ENCODE measurements at regions of chr9 and their contacts with region 1.

Region 1: GRCh38 chr9:35903049-35903448 is 3.0 kb upstream of the HRCT1 start:
- DNase-seq: no peak
- ATAC-seq: peak in 1 of 4 donors; percentile 33
- H3K4me3 ChIP-seq: no peak overlapping the region
- H3K27ac ChIP-seq: no peak overlapping the region
- H3K4me1 ChIP-seq: peaks cover 23% of the 10 kb centered on the region
- H3K27me3 ChIP-seq: no peaks in the 10 kb centered on the region
- CTCF ChIP-seq: peak; percentile 80

Region 2: GRCh38 chr9:35842795-35843194 is 60.3 kb before region 1 on chr9:
- intact Hi-C with region 1: no loop called
- DNase-seq: no peak
- ATAC-seq: no peak
- H3K4me3 ChIP-seq: no peak overlapping the region
- H3K27ac ChIP-seq: no peak overlapping the region
- H3K4me1 ChIP-seq: peaks cover 25% of the 10 kb centered on the region
- H3K27me3 ChIP-seq: no peaks in the 10 kb centered on the region
- CTCF ChIP-seq: no peak

Region 3: DNA sequence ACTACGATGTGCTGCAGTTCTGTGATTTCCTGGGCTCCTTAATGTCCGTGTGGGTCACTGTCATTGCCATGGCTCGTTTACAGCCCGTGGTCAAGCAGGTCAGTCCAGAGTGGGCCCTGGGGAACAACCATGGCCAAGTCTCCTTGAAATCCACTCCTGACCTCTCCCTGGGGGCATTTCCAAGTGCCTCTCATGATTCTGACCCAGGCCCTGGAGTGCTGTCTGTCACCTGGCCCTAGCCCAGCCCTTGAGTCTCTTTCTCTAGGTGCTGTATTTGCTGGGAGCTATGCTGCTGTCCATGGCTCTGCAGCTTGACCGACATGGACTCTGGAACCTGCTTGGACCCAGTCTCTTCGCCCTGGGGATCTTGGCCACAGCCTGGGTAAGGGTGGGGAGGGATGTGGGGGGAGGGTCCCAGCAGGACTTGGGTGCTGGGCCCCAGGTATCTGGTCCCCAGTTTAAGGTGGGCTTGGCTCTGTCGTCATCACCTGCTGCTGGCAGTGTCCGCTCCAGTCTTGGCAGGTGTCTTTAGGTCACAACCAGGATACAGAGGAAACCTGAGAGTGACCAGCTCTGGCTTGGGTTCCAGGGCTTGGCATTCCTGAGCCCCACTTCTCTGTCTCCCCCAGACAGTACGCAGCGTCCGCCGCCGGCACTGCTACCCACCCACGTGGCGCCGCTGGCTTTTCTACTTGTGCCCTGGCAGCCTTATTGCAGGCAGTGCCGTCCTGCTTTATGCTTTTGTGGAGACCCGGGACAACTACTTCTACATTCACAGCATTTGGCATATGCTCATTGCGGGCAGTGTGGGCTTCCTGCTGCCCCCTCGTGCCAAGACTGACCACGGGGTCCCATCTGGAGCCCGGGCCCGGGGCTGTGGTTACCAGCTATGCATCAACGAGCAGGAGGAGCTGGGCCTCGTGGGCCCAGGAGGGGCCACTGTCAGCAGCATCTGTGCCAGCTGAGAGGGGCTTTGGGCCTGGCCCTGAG is 49.9 kb before region 1 on chr9:
- intact Hi-C with region 1: loop called in 1 of 2 experiments (anchors 5 kb)
- DNase-seq: no peak
- ATAC-seq: no peak
- H3K4me3 ChIP-seq: no peak overlapping the region
- H3K27ac ChIP-seq: no peak overlapping the region
- H3K4me1 ChIP-seq: peaks cover 7% of the 10 kb centered on the region
- H3K27me3 ChIP-seq: no peaks in the 10 kb centered on the region
- CTCF ChIP-seq: no peak

Region 4: DNA sequence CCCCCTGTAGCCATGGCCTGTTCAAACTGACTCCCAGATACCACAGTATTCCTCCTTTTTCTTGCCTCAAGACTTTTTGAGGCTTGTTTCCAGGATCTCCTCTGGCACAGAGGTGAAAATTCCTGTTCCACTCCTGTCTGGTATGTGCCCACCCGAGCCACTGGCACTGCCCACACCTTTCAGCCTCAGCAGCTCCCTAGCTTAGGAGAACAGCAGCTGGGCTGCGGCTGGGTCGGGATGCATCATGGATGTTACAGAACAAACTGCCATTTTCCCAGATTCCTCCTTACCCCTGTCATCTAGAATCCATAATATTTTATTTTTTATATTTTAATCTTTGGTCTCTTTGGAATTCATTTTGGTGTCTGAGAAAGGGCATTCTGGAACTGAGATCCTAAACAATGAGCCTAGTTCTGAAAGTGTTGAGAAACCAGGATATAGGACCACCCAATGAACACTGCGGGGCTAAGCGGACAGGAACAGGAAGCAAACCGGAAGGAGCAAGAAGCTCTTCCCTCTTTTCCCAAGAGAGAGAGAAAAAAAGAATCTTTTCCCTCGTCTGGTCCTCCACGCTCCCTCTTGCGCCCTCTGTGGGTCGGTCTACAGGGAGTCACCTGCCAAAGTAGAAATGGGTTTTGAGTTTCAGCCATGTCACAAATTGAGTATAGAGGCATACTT is 42.4 kb after region 1 on chr9:
- intact Hi-C with region 1: loop called (anchors 1 to 5 kb)
- DNase-seq: peak; percentile 86 to 90
- ATAC-seq: peak; percentile 73 to 89 (median 82)
- H3K4me3 ChIP-seq: peak overlapping the region; percentile 45
- H3K27ac ChIP-seq: peak overlapping the region; percentile 6
- H3K4me1 ChIP-seq: peaks cover 7% of the 10 kb centered on the region
- H3K27me3 ChIP-seq: no peaks in the 10 kb centered on the region
- CTCF ChIP-seq: peak; percentile 78

Region 5: DNA sequence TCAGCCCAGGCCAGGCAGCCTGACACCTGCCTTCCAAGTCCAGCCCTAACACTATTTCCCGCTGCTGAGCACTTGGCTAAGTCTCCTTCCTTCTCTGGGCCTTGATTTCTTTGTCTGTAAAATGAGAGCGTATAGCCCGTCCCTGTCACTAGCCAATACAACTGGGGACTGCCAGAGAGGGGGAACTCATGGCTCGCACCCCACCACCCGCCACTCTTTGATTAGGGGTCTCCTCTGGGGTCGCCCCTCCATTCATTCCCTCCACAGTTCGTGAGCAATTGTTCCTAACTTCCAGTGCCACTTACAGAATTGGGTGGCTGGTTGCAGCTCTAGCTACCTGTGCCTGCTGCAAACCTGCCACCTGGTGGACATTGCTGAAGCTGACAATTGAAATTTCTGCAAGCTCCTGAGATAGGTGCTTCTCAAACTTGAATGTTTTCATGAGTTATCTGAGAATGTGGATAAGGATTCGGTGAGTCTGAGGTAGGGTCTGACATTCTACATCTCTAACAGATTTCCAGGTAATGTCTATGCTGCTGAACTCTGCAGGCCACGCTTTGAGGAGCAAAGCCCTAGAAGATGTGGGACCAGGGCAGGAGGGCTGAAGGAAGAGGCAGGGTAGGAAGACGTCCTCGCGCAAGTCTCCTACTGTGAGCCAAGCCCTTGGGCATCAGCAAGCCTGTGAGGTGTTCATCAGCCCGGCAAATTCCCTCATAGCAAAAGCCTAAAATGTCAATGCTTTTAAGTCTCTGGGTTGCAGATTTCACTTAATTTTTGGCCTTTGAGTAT is 120.4 kb after region 1 on chr9:
- intact Hi-C with region 1: loop called in 1 of 2 experiments (anchors 5 kb)
- DNase-seq: peak; percentile 39 to 64
- ATAC-seq: peak; percentile 70 to 84 (median 74)
- H3K4me3 ChIP-seq: no peak overlapping the region
- H3K27ac ChIP-seq: no peak overlapping the region
- H3K4me1 ChIP-seq: no peaks in the 10 kb centered on the region
- H3K27me3 ChIP-seq: no peaks in the 10 kb centered on the region
- CTCF ChIP-seq: peak; percentile 86

Region 6: DNA sequence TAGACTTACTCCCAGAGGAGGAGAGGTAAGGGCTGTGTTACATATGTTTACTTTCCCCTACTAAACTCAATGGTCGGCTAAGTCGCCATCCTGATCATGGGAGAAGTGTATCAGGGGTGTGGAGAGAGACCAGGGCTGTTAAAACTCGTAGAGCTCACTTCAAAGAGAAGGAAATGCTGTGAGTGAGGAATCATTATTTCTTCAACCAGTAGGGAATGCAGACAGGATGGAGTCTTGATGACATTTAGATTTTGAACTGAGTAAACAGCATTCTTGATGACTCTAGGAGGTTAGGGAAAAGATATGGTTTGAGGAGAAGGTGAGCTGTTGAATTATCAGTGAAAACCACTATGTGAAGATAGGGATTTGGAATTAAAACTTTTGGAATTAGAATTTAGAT is 150.9 kb after region 1 on chr9:
- intact Hi-C with region 1: no loop called
- DNase-seq: no peak
- ATAC-seq: no peak
- H3K4me3 ChIP-seq: no peak overlapping the region
- H3K27ac ChIP-seq: no peak overlapping the region
- H3K4me1 ChIP-seq: no peaks in the 10 kb centered on the region
- H3K27me3 ChIP-seq: no peaks in the 10 kb centered on the region
- CTCF ChIP-seq: no peak

Region 7: DNA sequence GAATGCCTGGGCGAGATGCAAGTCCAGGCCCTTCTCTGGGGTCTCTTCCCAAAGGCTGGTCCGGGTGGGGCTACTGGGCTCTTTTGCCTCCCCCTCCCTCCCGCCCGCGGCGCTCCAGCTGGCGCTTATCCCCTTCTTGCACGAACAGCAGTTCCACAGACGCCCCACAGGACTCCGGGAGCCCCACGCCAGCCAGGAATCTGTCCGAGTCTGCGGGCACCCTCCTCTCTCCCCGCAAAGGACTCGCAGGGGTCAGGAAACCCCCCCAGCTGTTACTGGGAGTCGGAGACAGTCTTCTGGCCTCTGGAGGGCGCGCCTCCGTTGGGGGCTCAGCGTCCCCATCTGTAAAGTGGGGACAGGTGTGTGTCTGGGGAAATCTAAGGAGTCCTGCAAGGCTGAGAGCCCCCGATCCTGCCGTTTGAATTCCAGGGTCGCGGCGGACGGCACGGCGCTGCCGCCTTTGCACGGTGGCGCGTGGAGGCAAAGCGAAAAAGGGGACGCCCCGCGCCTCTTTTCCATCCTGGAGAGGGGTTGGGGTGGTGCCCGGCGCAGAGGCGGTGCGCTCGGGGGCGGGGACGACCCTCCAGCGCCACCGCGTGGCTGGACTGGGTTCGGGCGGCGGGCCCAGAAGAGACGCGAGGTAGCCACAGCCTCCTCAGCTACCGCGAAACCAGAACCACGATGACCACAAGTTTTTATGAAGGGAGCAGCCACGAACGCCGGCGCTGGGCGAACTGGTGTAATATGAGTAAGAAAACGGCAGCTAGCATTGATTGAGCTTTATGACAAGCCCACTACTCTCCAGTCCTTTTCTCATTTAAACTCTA is 263.3 kb after region 1 on chr9:
- intact Hi-C with region 1: loop called in 1 of 2 experiments (anchors 2 kb)
- DNase-seq: peak; percentile 84 to 90
- ATAC-seq: peak; percentile 92 to 96 (median 93)
- H3K4me3 ChIP-seq: peak overlapping the region; percentile 64
- H3K27ac ChIP-seq: peak overlapping the region; percentile 41
- H3K4me1 ChIP-seq: peaks cover 5% of the 10 kb centered on the region
- H3K27me3 ChIP-seq: peaks cover 0 to 23% (median 0%) of the 10 kb centered on the region in 3 donors
- CTCF ChIP-seq: peak; percentile 95